Activated CD8-positive, alpha-beta T cell treated with anti-CD3 and anti-CD28 coated beads, Interleukin-2, amount 10 ng/mL, durations not matched to agents 7 days and 5 days (primary cell): ENCODE measurements at regions of chr5 and their contacts with region 1.

Region 1: DNA sequence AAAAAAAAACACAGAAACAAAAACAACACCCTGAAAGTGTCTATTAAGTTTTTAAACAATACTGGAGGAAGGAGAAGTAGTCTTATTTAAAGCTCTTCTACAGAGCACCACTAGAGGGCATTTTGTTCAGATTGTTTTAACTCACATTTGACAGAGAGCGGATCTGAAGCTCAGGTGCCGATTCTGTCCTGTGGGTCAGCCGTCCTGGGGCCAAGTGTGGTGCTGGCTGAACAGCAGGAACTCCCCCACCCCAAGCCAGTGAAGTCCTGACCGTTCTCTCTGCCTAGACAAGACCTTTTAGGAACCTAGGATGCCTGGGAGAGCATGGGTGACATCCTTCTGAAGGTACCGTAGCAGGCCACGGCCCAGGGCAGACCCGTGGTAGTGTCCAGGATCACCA is 3.9 kb downstream of the EXOC3 start:
- DNase-seq: no peak
- ATAC-seq: no peak
- H3K4me3 Mint-ChIP-seq: no peak overlapping the region
- H3K27ac Mint-ChIP-seq: no peak overlapping the region
- H3K4me1 Mint-ChIP-seq: peaks cover 43% of the 10 kb centered on the region
- H3K27me3 Mint-ChIP-seq: no peaks in the 10 kb centered on the region

Region 2: GRCh38 chr5:431001-431710 is 15.7 kb before region 1 on chr5:
- CTCF ChIA-PET with region 1: interaction called, 13 read pairs
- POLR2A ChIA-PET with region 1: interaction called, 4 read pairs
- DNase-seq: peak; percentile 58
- ATAC-seq: peak; percentile 92
- H3K4me3 Mint-ChIP-seq: no peak overlapping the region
- H3K27ac Mint-ChIP-seq: peak overlapping the region; percentile 43
- H3K4me1 Mint-ChIP-seq: peaks cover 13% of the 10 kb centered on the region
- H3K27me3 Mint-ChIP-seq: no peaks in the 10 kb centered on the region

Region 3: DNA sequence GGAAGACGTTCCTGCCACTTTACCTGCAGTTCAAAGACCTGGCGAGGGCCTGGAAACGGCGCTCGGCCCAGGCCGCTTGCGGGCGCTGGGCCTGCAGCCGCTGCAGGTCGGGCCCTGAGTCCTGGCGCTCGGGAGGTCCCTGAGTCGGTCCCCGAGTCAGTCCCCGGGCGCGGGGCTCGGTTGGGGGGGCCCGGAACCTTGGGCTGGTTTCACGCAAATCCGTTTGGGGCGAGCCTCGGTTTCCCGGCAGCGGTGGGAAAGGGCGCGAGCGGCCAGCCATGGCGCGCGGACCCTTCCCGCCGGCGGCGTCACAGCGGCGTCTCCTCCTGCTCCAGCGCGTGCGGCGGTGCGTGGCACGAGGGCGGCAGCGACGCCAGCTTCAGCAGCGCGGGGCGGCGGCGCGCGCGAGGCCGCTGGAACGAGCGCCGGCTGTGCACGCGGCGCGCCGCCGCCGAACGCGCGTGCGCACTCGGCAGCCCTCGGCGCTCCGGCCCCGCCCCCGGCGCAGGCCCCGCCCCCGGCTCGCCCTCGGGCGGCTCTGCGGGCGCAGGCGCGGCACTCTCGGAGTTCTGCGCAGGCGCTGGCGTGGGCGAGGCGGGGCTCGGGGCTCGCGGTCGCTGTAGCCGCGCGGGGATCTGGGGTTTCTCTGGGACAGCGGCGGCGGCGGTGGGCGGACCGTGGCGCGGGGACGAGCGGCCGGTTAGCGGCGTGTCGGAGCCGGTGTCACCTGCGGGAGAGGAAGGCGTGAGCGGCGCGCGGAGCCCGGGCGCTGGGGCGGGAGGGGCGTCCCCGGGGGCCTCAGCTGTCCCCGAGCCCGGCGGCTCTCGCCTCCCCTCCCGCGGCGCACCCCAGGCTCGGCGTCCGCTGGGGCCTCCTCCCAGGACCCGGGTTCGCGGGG is 26.0 kb after region 1 on chr5:
- CTCF ChIA-PET with region 1: interaction called, 29 read pairs
- POLR2A ChIA-PET with region 1: interaction called, 7 read pairs
- DNase-seq: peak; percentile 91
- ATAC-seq: peak; percentile 82
- H3K4me3 Mint-ChIP-seq: peak overlapping the region; percentile 71
- H3K27ac Mint-ChIP-seq: peak overlapping the region; percentile 79
- H3K4me1 Mint-ChIP-seq: peaks cover 20% of the 10 kb centered on the region
- H3K27me3 Mint-ChIP-seq: peaks cover 5% of the 10 kb centered on the region